ENCODE measurements at regions of chr6 and their contacts with region 1.

Region 1: DNA sequence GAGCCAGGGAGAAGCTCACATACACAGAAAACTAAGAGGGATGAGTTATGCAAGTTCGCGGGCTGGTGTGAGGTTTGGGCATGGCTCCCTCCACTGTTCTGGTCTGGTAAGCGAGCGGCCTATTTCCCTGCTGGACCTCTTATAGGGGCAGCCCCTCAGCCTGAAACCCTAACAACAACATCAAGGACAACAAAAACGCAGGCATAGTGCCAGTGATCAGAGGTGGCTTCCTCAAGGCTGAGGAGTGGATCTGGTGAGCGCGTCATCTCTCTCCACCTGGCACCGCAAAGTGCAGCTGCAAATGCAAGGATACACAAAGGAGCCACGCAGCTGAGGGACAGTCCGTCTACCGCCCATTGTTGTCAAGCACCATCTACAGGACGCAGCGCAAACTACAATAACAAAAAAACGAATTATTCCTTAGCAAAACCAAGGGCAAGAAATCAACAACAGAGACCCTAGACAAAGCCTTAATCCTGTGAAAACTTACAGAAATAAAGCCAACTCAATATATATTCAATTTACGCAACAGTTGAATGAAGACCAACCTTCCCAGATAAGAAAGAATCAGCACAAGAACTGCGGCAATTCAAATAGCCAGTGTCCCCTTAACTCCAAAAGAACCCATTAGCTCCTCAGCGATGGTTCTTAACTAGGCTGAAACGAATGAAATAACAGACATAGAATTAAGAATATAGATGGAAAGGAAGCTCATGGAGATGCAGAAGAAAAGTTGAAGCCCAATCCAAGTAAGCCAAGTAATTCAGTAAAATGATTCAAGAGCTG is 9.2 kb upstream of the DEFB110 start:
- DNase-seq: peak; percentile 11 to 77 (median 34)
- ATAC-seq: peak; percentile 97
- H3K4me3 ChIP-seq: 0 out of 2 replicates have a peak overlapping the region, but pooled peaks have one; percentile 18
- H3K27ac ChIP-seq: no peak overlapping the region
- H3K4me1 ChIP-seq: peaks cover 0 to 8% of the 10 kb centered on the region in 2 experiments; a peak in 2 of 5 replicates
- H3K27me3 ChIP-seq: no peaks in the 10 kb centered on the region; a peak in 1 of 5 replicates
- CTCF ChIP-seq: peak; percentile 62 to 86 (median 74)
- EP300 ChIP-seq: no peak
- POLR2A ChIP-seq: no peak
- RAD21 ChIP-seq: peak; percentile 82 to 83; a peak in 3 of 4 replicates

Region 2: DNA sequence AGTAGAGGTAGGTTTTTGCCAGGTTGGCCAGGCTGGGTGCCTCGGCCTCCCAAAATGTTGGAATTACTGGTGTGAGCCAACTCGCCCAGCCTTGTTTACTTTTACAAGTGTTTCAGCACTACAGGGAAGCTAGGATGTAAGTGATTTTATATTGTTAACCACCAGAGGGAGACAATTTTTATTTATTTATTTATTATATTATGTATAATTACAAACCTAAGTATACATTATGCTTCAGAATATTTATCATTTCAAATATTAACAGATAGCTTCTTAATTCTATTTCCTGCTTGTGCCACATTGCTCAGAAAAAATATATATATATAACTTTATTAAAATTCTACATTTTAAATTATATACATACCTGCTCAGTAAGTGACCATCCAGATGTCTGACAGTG is 577.7 kb before region 1 on chr6:
- CTCF ChIA-PET with region 1: no interaction called
- POLR2A ChIA-PET with region 1: interaction called, 3 read pairs
- in situ Hi-C with region 1: no loop called
- intact Hi-C with region 1: loop called (anchors 5 kb)
- DNase-seq: peak in 1 of 4 experiments; percentile 7
- ATAC-seq: peak; percentile 72
- H3K4me3 ChIP-seq: no peak overlapping the region
- H3K27ac ChIP-seq: no peak overlapping the region
- H3K4me1 ChIP-seq: no peaks in the 10 kb centered on the region
- H3K27me3 ChIP-seq: no peaks in the 10 kb centered on the region
- CTCF ChIP-seq: peak in 2 of 3 experiments; percentile 31 to 35; a peak in 4 of 6 replicates
- EP300 ChIP-seq: no peak
- POLR2A ChIP-seq: no peak
- RAD21 ChIP-seq: 0 out of 4 replicates have a peak, but pooled peaks of 1 of the 2 experiments have one; percentile 7

Region 3: GRCh38 chr6:49531774-49532569 is 499.0 kb before region 1 on chr6:
- CTCF ChIA-PET with region 1: interaction called, 12 read pairs
- POLR2A ChIA-PET with region 1: no interaction called
- in situ Hi-C with region 1: no loop called
- intact Hi-C with region 1: loop called (anchors 1 kb)
- DNase-seq: peak; percentile 55 to 72 (median 60)
- ATAC-seq: peak; percentile 95
- H3K4me3 ChIP-seq: no peak overlapping the region
- H3K27ac ChIP-seq: no peak overlapping the region; the same call in 2 of the 3 replicates
- H3K4me1 ChIP-seq: no peaks in the 10 kb centered on the region; a peak in 1 of 5 replicates
- H3K27me3 ChIP-seq: no peaks in the 10 kb centered on the region
- CTCF ChIP-seq: peak; percentile 79 to 100 (median 99)
- EP300 ChIP-seq: 0 out of 2 replicates have a peak, but pooled peaks have one; percentile 40
- POLR2A ChIP-seq: no peak
- RAD21 ChIP-seq: peak; percentile 98 to 99

Region 4: GRCh38 chr6:49606696-49607390 is 424.1 kb before region 1 on chr6:
- CTCF ChIA-PET with region 1: no interaction called
- POLR2A ChIA-PET with region 1: no interaction called
- in situ Hi-C with region 1: no loop called
- intact Hi-C with region 1: loop called (anchors 1 kb)
- DNase-seq: peak; percentile 76 to 86 (median 81)
- ATAC-seq: peak; percentile 71
- H3K4me3 ChIP-seq: no peak overlapping the region
- H3K27ac ChIP-seq: no peak overlapping the region
- H3K4me1 ChIP-seq: no peaks in the 10 kb centered on the region
- H3K27me3 ChIP-seq: no peaks in the 10 kb centered on the region
- CTCF ChIP-seq: peak; percentile 86 to 88 (median 88)
- EP300 ChIP-seq: no peak
- POLR2A ChIP-seq: no peak
- RAD21 ChIP-seq: peak; percentile 83 to 91

Region 5: GRCh38 chr6:49799090-49799489 is 231.9 kb before region 1 on chr6:
- CTCF ChIA-PET with region 1: no interaction called
- POLR2A ChIA-PET with region 1: no interaction called
- in situ Hi-C with region 1: no loop called
- intact Hi-C with region 1: no loop called
- DNase-seq: no peak
- ATAC-seq: no peak
- H3K4me3 ChIP-seq: no peak overlapping the region
- H3K27ac ChIP-seq: no peak overlapping the region
- H3K4me1 ChIP-seq: no peaks in the 10 kb centered on the region
- H3K27me3 ChIP-seq: no peaks in the 10 kb centered on the region
- CTCF ChIP-seq: no peak
- EP300 ChIP-seq: no peak
- POLR2A ChIP-seq: no peak
- RAD21 ChIP-seq: no peak

Region 6: DNA sequence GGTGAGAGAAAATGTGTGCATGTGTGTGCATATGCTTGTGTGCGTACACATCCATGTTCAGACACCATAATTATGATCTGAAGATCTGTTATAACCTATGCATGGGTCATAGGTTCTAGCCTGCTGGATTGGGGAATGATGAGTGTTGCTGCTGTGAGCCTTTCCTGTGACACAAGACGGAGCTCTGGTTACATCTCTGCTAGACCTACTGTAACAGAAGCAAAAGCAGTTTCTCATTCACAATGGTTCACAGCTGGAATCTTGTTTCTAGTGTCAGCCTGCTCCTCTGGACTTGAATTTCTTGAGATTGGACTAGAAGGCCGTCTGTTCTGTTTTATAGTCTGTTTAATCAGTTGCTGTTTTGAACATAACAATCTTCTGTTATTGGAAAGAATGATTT is 107.1 kb before region 1 on chr6:
- CTCF ChIA-PET with region 1: interaction called, 15 read pairs
- POLR2A ChIA-PET with region 1: interaction called, 3 read pairs
- in situ Hi-C with region 1: no loop called
- intact Hi-C with region 1: loop called (anchors 1 kb)
- DNase-seq: peak in 1 of 4 experiments; percentile 45
- ATAC-seq: peak; percentile 95
- H3K4me3 ChIP-seq: no peak overlapping the region
- H3K27ac ChIP-seq: no peak overlapping the region
- H3K4me1 ChIP-seq: no peaks in the 10 kb centered on the region
- H3K27me3 ChIP-seq: no peaks in the 10 kb centered on the region
- CTCF ChIP-seq: peak in 2 of 3 experiments; percentile 58 to 63; a peak in 4 of 6 replicates
- EP300 ChIP-seq: no peak
- POLR2A ChIP-seq: no peak
- RAD21 ChIP-seq: peak; percentile 57 to 80

Measured in K562 (cell line).